B cell (primary cell): ENCODE measurements at regions of chr9 and their contacts with region 1.

Region 1: DNA sequence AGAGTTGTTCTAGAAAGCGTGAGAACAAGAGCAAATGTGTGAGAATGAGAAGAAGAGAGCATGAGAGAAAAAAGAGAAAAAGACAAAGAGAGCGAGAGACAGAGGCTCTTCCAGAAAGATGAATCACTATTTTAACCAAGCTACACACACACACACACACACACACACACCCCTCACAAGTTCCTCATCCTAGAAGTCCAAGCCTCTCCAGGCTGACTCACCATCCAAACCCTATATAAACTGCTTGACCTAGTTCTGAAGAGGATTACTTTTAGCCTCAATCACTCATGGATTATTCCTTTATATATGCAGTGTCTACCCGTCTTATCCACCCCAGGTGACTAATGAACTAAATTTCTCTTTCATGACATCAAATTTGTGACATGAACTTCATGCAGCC is 37.6 kb downstream of the C9orf57 start:
- DNase-seq: no peak
- ATAC-seq: no peak
- H3K4me3 ChIP-seq: no peak overlapping the region
- H3K4me3 Mint-ChIP-seq: no peak overlapping the region
- H3K27ac ChIP-seq: no peak overlapping the region
- H3K27ac Mint-ChIP-seq: no peak overlapping the region
- H3K4me1 ChIP-seq: peaks cover 0 to 4% of the 10 kb centered on the region in 2 donors
- H3K4me1 Mint-ChIP-seq: peaks cover 5% of the 10 kb centered on the region
- H3K27me3 ChIP-seq: peaks cover 0 to 1% (median 0%) of the 10 kb centered on the region in 4 experiments
- H3K27me3 Mint-ChIP-seq: peaks cover 7% of the 10 kb centered on the region
- CTCF ChIP-seq: no peak

Region 2: GRCh38 chr9:71285191-71285656 is 737.6 kb before region 1 on chr9:
- CTCF ChIA-PET with region 1: interaction called, 71 read pairs
- POLR2A ChIA-PET with region 1: no interaction called
- intact Hi-C with region 1: no loop called
- DNase-seq: peak; percentile 54
- ATAC-seq: peak; percentile 61
- H3K4me3 ChIP-seq: no peak overlapping the region
- H3K4me3 Mint-ChIP-seq: no peak overlapping the region
- H3K27ac ChIP-seq: no peak overlapping the region
- H3K27ac Mint-ChIP-seq: no peak overlapping the region
- H3K4me1 ChIP-seq: no peaks in the 10 kb centered on the region
- H3K4me1 Mint-ChIP-seq: no peaks in the 10 kb centered on the region
- H3K27me3 ChIP-seq: no peaks in the 10 kb centered on the region
- H3K27me3 Mint-ChIP-seq: no peaks in the 10 kb centered on the region
- CTCF ChIP-seq: peak; percentile 93

Region 3: DNA sequence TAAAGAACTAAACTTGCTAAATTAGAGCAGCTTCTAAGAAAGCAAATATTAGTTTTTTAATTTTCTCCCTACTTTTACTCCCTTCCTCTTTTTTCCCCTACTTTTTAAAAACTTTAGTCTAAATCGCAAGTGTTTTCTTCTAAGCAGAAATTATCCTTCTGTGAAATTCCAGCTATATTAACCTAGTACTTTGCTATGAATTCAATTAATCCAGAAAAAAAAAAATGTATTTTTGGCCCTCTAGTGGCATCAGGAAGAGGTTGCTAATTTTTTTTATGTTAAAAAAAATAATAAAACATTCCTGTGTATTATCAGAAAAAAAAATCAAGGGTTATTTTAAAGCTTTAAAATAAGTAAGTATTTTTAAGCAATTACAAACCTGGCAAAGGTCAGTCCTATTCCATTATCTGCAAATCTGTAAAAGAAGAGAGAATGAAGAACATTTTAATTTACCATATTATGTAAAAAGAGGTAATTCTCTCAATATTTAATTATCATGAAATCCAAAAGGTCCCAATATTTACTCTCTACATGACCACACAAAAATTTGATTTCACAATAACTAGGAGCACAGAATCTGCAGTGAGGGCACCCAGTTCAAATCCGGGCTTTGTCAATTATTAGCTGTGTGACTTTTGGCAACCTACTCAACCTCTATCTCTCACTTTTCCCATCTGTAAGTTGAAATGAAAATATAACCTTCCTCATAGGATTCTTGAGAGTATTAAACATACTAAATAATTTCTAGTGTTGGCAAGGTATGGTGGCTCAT is 306.5 kb before region 1 on chr9:
- CTCF ChIA-PET with region 1: interaction called, 11 read pairs
- POLR2A ChIA-PET with region 1: no interaction called
- intact Hi-C with region 1: no loop called
- DNase-seq: no peak
- ATAC-seq: no peak
- H3K4me3 ChIP-seq: no peak overlapping the region
- H3K4me3 Mint-ChIP-seq: no peak overlapping the region
- H3K27ac ChIP-seq: no peak overlapping the region
- H3K27ac Mint-ChIP-seq: no peak overlapping the region
- H3K4me1 ChIP-seq: no peaks in the 10 kb centered on the region
- H3K4me1 Mint-ChIP-seq: no peaks in the 10 kb centered on the region
- H3K27me3 ChIP-seq: no peaks in the 10 kb centered on the region
- H3K27me3 Mint-ChIP-seq: no peaks in the 10 kb centered on the region
- CTCF ChIP-seq: peak; percentile 82

Region 4: DNA sequence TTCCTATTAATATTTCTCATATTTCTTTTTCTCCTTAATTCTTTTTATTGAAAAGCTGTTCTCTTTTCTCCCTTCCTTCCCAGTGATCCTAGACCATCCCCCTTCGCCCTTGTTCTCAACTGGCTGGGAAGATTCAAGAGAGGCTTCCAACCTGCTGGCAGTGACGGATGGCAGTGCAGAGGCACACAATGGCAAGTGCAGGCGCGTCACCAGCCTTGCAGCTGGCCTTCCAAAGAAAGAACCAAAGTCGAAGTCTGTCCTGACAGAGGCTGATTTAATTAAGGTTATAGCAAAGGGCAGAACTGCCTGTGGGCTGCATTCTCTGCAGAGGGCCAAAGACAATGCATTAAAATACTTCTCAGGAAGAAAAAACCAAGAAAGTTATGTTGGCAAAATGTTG is 261.9 kb before region 1 on chr9:
- CTCF ChIA-PET with region 1: interaction called, 10 read pairs
- POLR2A ChIA-PET with region 1: no interaction called
- intact Hi-C with region 1: no loop called
- DNase-seq: no peak
- ATAC-seq: no peak
- H3K4me3 ChIP-seq: no peak overlapping the region
- H3K4me3 Mint-ChIP-seq: no peak overlapping the region
- H3K27ac ChIP-seq: no peak overlapping the region
- H3K27ac Mint-ChIP-seq: no peak overlapping the region
- H3K4me1 ChIP-seq: peaks cover 48 to 66% of the 10 kb centered on the region in 2 donors
- H3K4me1 Mint-ChIP-seq: peaks cover 78% of the 10 kb centered on the region
- H3K27me3 ChIP-seq: no peaks in the 10 kb centered on the region
- H3K27me3 Mint-ChIP-seq: no peaks in the 10 kb centered on the region
- CTCF ChIP-seq: no peak

Region 5: GRCh38 chr9:71783120-71783530 is 239.7 kb before region 1 on chr9:
- CTCF ChIA-PET with region 1: interaction called, 24 read pairs
- POLR2A ChIA-PET with region 1: no interaction called
- intact Hi-C with region 1: no loop called
- DNase-seq: peak; percentile 90
- ATAC-seq: peak; percentile 93
- H3K4me3 ChIP-seq: peak overlapping the region in 3 of 5 experiments; percentile 6 to 22 (median 19)
- H3K4me3 Mint-ChIP-seq: peak overlapping the region; percentile 74
- H3K27ac ChIP-seq: peak overlapping the region; percentile 77 to 85
- H3K27ac Mint-ChIP-seq: peak overlapping the region; percentile 93
- H3K4me1 ChIP-seq: peaks cover 30 to 32% of the 10 kb centered on the region in 2 donors
- H3K4me1 Mint-ChIP-seq: peaks cover 44% of the 10 kb centered on the region
- H3K27me3 ChIP-seq: no peaks in the 10 kb centered on the region
- H3K27me3 Mint-ChIP-seq: no peaks in the 10 kb centered on the region
- CTCF ChIP-seq: peak; percentile 48

Region 6: DNA sequence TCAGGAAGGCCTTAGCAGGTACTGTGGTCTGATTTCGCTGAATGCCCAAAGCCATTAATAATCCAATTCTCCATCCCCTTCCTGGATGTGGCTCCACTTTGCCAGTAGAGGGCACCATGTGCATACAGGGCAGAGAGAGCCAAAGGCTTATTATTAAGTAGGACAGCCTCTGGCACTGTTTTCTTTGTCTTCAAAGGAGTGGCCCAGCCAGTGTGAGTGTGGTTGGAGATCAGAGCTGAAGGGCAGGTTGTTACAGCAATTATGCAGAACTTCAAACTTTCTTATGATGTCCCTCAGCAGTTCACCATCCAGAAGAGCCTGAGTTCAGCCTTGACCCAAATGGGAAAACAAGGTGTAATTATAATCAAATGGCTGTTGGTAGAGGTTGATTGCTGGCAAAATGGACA is 215.9 kb before region 1 on chr9:
- CTCF ChIA-PET with region 1: interaction called, 86 read pairs
- POLR2A ChIA-PET with region 1: interaction called, 3 read pairs
- intact Hi-C with region 1: loop called (anchors 1 kb)
- DNase-seq: peak; percentile 74
- ATAC-seq: peak; percentile 88
- H3K4me3 ChIP-seq: no peak overlapping the region
- H3K4me3 Mint-ChIP-seq: no peak overlapping the region
- H3K27ac ChIP-seq: no peak overlapping the region
- H3K27ac Mint-ChIP-seq: peak overlapping the region; percentile 2
- H3K4me1 ChIP-seq: peaks cover 14 to 16% of the 10 kb centered on the region in 2 donors
- H3K4me1 Mint-ChIP-seq: peaks cover 24% of the 10 kb centered on the region
- H3K27me3 ChIP-seq: no peaks in the 10 kb centered on the region
- H3K27me3 Mint-ChIP-seq: no peaks in the 10 kb centered on the region
- CTCF ChIP-seq: peak; percentile 89

Region 7: DNA sequence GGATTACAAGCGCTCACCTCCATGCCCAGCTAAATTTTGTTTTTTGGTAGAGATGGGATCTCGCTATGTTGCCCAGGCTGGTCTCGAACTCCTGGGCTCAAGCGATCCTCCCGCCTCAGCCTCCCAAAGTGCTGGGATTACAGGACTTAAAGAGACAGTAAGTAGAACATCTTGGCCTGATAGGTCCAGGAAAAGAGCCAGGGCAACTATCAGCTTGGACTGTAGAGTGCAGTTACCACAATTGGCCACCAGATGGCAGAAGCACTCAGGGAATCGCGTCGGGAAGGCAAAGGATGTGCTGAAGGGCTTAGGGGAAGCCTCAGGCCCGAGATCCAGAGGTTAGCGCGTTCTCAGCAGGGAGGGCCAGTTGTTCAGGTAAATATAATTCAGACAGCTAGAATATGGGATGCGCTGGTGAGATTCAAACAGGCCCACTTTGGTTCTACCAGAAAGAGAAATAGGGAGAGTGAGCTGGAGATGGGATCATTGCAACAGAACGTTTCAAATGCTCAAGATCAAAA is 16.1 kb after region 1 on chr9:
- CTCF ChIA-PET with region 1: interaction called, 55 read pairs
- POLR2A ChIA-PET with region 1: no interaction called
- intact Hi-C with region 1: no loop called
- DNase-seq: peak; percentile 72
- ATAC-seq: peak; percentile 84
- H3K4me3 ChIP-seq: no peak overlapping the region
- H3K4me3 Mint-ChIP-seq: peak overlapping the region; percentile 9
- H3K27ac ChIP-seq: no peak overlapping the region
- H3K27ac Mint-ChIP-seq: no peak overlapping the region
- H3K4me1 ChIP-seq: peaks cover 4 to 5% of the 10 kb centered on the region in 2 donors
- H3K4me1 Mint-ChIP-seq: peaks cover 5% of the 10 kb centered on the region
- H3K27me3 ChIP-seq: no peaks in the 10 kb centered on the region
- H3K27me3 Mint-ChIP-seq: peaks cover 20% of the 10 kb centered on the region
- CTCF ChIP-seq: peak; percentile 97

Region 8: GRCh38 chr9:72060513-72060912 is 37.7 kb after region 1 on chr9 and contains the start of gene C9orf57:
- CTCF ChIA-PET with region 1: no interaction called
- POLR2A ChIA-PET with region 1: no interaction called
- intact Hi-C with region 1: no loop called
- DNase-seq: no peak
- ATAC-seq: no peak
- H3K4me3 ChIP-seq: no peak within 1 kb of the TSS
- H3K4me3 Mint-ChIP-seq: no peak within 1 kb of the TSS
- H3K27ac ChIP-seq: no peak within 1 kb of the TSS
- H3K27ac Mint-ChIP-seq: no peak within 1 kb of the TSS
- H3K4me1 ChIP-seq: no peaks in the 10 kb centered on the region
- H3K4me1 Mint-ChIP-seq: no peaks in the 10 kb centered on the region
- H3K27me3 ChIP-seq: no peaks in the 10 kb centered on the region
- H3K27me3 Mint-ChIP-seq: peaks cover 8% of the 10 kb centered on the region
- CTCF ChIP-seq: no peak
- total RNA-seq, gene C9orf57: not detected in 2 replicates

Region 9: GRCh38 chr9:72082536-72082935 is 59.7 kb after region 1 on chr9:
- CTCF ChIA-PET with region 1: no interaction called
- POLR2A ChIA-PET with region 1: no interaction called
- intact Hi-C with region 1: no loop called
- DNase-seq: no peak
- ATAC-seq: no peak
- H3K4me3 ChIP-seq: no peak overlapping the region
- H3K4me3 Mint-ChIP-seq: no peak overlapping the region
- H3K27ac ChIP-seq: no peak overlapping the region
- H3K27ac Mint-ChIP-seq: no peak overlapping the region
- H3K4me1 ChIP-seq: no peaks in the 10 kb centered on the region
- H3K4me1 Mint-ChIP-seq: no peaks in the 10 kb centered on the region
- H3K27me3 ChIP-seq: no peaks in the 10 kb centered on the region
- H3K27me3 Mint-ChIP-seq: peaks cover 14% of the 10 kb centered on the region
- CTCF ChIP-seq: no peak